Sciatic nerve (tissue), 2 donors: ENCODE measurements at regions of chr13 and their contacts with region 1.

Region 1: GRCh38 chr13:51148952-51149573 is 38.0 kb upstream of the C13orf42 start:
- DNase-seq: peak; percentile 68
- ATAC-seq: peak; percentile 84

Region 2: DNA sequence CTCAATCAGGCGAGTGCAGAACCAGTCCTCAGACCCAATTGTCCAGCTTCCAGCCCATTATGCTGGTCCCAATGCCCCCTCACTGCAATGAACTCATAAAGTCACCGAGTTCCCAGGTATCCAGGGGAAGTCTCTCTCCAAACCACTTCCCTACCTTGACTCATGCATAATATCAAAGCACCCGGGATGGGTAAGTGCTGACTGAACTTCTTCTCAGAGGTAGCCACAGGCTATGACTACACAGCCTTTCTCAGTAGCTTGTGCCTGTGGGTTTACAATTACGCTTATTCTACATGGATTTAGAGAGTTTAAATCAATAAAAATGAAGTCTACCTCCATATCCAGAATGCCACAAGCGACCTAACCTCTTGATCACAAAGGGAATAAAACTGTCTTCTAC is 36.3 kb before region 1 on chr13:
- intact Hi-C with region 1: no loop called
- DNase-seq: no peak
- ATAC-seq: no peak

Region 3: DNA sequence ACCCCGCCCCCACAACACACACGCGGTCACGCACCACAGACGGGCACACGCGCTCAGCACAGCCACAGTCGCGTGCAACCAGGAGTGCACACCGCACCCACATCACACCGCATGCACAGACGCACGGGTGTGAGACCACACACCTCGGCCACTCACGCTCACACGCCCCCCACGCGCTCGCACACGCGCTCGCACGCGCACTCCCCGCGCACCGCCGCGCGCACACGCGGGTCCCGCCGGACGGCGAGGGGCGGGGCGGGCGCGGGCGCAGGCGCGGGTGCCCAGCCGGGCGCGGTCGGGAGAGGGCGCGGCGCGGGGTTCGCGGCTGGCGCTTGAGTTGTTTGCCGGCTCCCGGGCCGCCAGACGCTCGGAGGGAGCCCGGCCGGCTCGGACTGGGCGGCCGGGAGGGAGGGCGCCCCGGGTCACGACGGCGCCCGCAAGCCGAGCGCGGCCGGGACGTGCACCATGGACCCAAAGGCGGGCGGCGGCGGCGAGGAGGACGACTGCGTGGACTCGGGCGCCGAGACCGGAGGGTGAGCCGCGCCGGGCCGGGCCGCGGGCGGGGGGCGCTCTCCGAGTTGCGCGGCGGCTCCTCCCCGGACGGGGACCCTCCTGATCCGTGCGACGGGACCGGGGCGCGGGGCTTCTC is 73.1 kb after region 1 on chr13 and contains the start of gene FAM124A:
- intact Hi-C with region 1: loop called (anchors 5 kb)
- DNase-seq: peak; percentile 70
- ATAC-seq: peak; percentile 83
- total RNA-seq, gene FAM124A: 19.2 TPM